ENCODE measurements at regions of chr10 and their contacts with region 1.

Region 1: DNA sequence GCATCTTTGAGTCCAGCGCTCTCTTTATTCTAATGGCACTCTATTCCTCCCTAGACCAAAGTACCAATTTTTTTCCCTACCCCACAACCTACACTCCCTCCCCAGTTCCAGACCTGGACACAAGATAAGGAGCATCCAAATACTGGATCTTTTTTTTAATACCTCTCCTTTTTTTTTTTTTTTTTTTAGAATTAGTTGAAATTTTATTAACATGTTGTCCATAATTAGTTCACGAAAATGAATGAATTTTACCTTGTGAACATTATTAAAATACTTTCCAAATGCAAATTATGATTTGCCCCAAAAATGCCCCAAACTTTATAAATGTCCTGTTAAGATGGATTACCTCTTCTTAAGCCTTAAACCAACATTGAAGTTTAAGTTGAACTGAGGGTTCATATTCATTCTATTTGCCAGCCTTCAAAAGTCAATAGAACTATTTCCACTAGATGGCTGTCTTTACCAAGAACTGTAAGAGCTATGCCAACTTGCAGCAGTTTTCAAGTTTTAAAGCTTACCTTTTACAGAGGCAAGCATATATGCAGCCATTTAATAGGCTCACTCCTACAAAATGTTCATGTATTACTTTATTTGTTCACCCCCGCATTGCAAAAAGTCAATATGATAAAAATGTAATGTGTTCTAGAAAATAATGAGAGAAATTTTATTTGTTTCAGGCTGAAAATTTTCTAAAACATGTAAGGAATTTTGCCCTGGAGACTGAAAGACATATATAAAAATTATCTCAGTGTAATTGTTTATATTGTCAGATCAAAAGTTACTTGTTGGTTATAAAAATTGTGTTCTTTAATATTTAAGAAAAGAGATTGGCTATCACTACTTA is 39.7 kb upstream of the TNKS2 start:
- DNase-seq: no peak
- H3K4me3 Mint-ChIP-seq: no peak overlapping the region
- H3K27ac Mint-ChIP-seq: no peak overlapping the region
- H3K4me1 Mint-ChIP-seq: no peaks in the 10 kb centered on the region
- H3K27me3 Mint-ChIP-seq: peaks cover 37% of the 10 kb centered on the region

Region 2: GRCh38 chr10:91829268-91829667 is 70.7 kb after region 1 on chr10:
- intact Hi-C with region 1: loop called (anchors 5 kb)
- DNase-seq: no peak
- H3K4me3 Mint-ChIP-seq: no peak overlapping the region
- H3K27ac Mint-ChIP-seq: no peak overlapping the region
- H3K4me1 Mint-ChIP-seq: no peaks in the 10 kb centered on the region
- H3K27me3 Mint-ChIP-seq: no peaks in the 10 kb centered on the region

Region 3: GRCh38 chr10:91856637-91857036 is 98.1 kb after region 1 on chr10:
- intact Hi-C with region 1: loop called (anchors 5 kb)
- DNase-seq: no peak
- H3K4me3 Mint-ChIP-seq: no peak overlapping the region
- H3K27ac Mint-ChIP-seq: no peak overlapping the region
- H3K4me1 Mint-ChIP-seq: no peaks in the 10 kb centered on the region
- H3K27me3 Mint-ChIP-seq: no peaks in the 10 kb centered on the region